OCI-LY7 (cell line): ENCODE measurements at regions of chr10 and their contacts with region 1.

Region 1: GRCh38 chr10:92657024-92657423 is 32.7 kb upstream of the HHEX start:
- DNase-seq: no peak
- H3K4me3 ChIP-seq: no peak overlapping the region
- H3K27ac ChIP-seq: no peak overlapping the region
- H3K4me1 ChIP-seq: no peaks in the 10 kb centered on the region
- CTCF ChIP-seq: no peak

Region 2: GRCh38 chr10:92619368-92619767 is 37.7 kb before region 1 on chr10:
- CTCF ChIA-PET with region 1: no interaction called
- POLR2A ChIA-PET with region 1: interaction called, 4 read pairs
- intact Hi-C with region 1: loop called (anchors 5 kb)
- DNase-seq: no peak
- H3K4me3 ChIP-seq: no peak overlapping the region
- H3K27ac ChIP-seq: no peak overlapping the region
- H3K4me1 ChIP-seq: no peaks in the 10 kb centered on the region
- CTCF ChIP-seq: no peak